IMR-90 (cell line): ENCODE measurements at regions of chr1 and their contacts with region 1.

Region 1: DNA sequence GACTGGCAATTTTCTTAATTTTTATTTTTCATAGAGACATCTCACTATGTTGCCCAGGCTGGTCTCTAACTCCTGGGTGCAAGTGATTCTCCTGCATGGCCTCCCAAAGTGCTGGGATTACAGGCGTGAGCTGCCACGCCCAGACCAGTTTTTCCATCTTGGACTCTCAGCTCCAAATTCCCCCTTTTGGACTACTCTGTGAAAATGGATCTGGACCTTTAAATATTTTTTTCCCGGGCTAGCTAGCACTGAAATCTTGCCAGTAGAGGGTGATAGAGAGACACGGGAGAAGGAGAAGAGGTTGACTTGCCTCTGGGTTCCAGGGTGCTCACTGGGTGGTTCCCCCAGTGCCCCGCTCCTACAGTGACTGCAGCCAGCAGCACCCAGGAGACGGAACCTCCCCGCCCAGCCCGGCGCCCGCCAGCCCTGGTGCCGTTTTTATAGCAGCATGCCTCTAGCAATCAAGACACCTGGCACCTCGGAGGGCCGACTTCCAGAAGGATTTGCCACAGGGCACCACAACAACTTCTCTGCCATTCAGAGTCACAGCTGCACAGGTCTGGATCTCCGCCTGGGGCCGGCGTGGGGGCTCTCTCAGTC is 34.7 kb upstream of the SCCPDH start:
- DNase-seq: peak; percentile 66
- ATAC-seq: peak; percentile 98
- H3K4me3 ChIP-seq: no peak overlapping the region
- H3K27ac ChIP-seq: no peak overlapping the region
- H3K4me1 ChIP-seq: no peaks in the 10 kb centered on the region
- H3K27me3 ChIP-seq: no peaks in the 10 kb centered on the region
- CTCF ChIP-seq: peak; percentile 92
- POLR2A ChIP-seq: no peak
- RAD21 ChIP-seq: peak; percentile 76

Region 2: GRCh38 chr1:246622035-246622652 is 67.4 kb before region 1 on chr1:
- CTCF ChIA-PET with region 1: no interaction called
- POLR2A ChIA-PET with region 1: no interaction called
- dilution Hi-C with region 1: no loop called
- in situ Hi-C with region 1: no loop called
- intact Hi-C with region 1: no loop called
- DNase-seq: peak; percentile 60
- ATAC-seq: peak; percentile 91
- H3K4me3 ChIP-seq: no peak overlapping the region
- H3K27ac ChIP-seq: no peak overlapping the region
- H3K4me1 ChIP-seq: peaks cover 3% of the 10 kb centered on the region
- H3K27me3 ChIP-seq: no peaks in the 10 kb centered on the region
- CTCF ChIP-seq: no peak
- POLR2A ChIP-seq: no peak
- RAD21 ChIP-seq: no peak

Region 3: GRCh38 chr1:246647113-246647512 is 42.4 kb before region 1 on chr1:
- CTCF ChIA-PET with region 1: interaction called, 6 read pairs
- POLR2A ChIA-PET with region 1: no interaction called
- dilution Hi-C with region 1: no loop called
- in situ Hi-C with region 1: no loop called
- intact Hi-C with region 1: loop called (anchors 5 kb)
- DNase-seq: peak; percentile 71
- ATAC-seq: peak; percentile 97
- H3K4me3 ChIP-seq: no peak overlapping the region
- H3K27ac ChIP-seq: peak overlapping the region; percentile 0; the same call in 1 of the 2 replicates
- H3K4me1 ChIP-seq: peaks cover 4% of the 10 kb centered on the region
- H3K27me3 ChIP-seq: no peaks in the 10 kb centered on the region
- CTCF ChIP-seq: peak; percentile 57
- POLR2A ChIP-seq: no peak
- RAD21 ChIP-seq: peak; percentile 67

Region 4: DNA sequence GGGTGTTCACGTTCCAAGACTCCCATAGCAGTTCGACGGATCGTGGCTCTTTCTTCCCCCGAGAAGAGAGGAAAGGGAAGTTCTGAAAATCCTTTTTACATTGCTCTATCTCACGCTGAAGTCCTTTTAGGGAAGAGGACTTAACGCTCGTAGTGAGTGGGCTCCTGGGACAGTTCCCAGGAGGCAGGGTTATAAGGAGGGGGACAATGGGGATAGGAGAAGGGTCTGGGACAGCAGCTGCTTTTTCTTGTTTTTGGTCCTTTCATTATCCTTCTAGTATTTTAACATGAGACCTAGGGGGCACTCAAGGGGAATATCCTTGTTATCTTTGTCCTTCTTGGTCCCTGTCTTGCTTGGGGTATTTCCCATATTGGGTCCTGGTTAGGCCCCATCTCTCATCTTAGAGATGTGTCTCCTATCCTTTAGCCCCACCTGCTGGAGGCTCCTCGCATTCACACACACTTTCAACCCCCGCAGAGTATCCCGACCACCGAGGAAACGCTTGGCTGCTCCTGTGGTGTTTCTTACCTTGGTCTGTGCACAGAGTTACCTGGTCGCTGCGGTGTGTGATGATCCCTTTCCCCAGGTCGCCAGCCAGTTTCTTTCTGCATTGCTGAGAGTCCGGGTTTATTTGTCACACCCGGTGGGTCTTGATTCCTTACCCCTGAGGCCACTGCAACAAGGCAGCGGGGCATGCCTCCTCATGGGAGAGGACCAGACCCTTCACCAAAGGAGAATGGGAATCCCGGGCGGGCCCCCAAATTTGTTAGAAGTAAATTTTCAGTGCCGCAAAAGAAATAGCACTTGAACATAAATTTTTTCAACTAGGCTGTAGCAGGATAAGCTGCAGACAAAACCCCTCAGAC is 64.4 kb after region 1 on chr1:
- CTCF ChIA-PET with region 1: interaction called, 3 read pairs
- POLR2A ChIA-PET with region 1: no interaction called
- dilution Hi-C with region 1: no loop called
- in situ Hi-C with region 1: loop called (anchors 5 kb)
- intact Hi-C with region 1: loop called (anchors 1 kb)
- DNase-seq: peak; percentile 68
- ATAC-seq: peak; percentile 100
- H3K4me3 ChIP-seq: no peak overlapping the region
- H3K27ac ChIP-seq: no peak overlapping the region
- H3K4me1 ChIP-seq: no peaks in the 10 kb centered on the region
- H3K27me3 ChIP-seq: no peaks in the 10 kb centered on the region
- CTCF ChIP-seq: peak; percentile 83
- POLR2A ChIP-seq: no peak
- RAD21 ChIP-seq: peak; percentile 90